ENCODE measurements at regions of chr1 and their contacts with region 1.

Region 1: DNA sequence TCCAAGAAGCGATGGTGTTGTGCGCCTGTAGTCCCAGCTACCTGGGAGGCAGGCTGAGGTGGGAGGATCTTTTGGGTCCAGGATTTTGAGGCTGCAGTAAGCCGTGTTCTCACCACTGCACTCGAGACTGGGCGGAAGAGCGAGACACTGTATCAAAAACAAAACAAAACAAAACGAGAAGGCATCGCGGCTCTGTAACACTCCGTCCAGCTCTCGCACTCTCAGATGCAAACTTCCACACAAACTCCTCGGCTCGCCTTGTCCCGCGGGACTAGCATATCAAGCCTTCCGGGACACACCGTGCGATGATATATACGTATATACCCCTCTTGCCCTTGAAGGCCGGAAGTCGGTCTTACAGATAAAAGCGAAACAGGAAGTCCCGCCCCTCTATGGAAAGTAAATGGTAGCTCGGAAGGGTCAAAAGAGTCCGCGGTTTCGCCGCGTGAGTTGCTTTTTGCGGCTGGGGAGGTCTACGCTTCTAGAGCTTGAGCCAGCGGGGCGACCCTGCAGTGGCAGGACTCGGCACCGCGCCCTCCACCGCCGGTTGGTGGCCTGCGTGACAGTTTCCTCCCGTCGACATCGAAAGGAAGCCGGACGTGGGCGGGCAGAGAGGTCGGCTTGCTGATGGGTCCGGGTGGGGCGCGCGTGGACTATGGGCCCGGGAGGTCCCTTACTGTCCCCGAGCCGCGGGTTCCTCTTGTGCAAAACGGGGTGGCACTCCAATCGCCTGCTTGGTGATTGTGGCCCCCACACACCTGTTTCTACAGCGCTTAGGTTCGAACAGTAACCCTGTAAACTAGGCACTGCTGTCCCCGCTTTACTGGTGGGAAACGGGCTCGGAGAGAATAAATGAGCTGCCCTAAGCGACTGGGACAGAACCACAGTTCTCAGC is at the start of gene COA6:
- DNase-seq: peak; percentile 90
- H3K4me3 Mint-ChIP-seq: peak within 1 kb of the TSS; percentile 96
- H3K27ac Mint-ChIP-seq: peak within 1 kb of the TSS; percentile 98
- H3K4me1 Mint-ChIP-seq: peaks cover 54% of the 10 kb centered on the region
- H3K27me3 Mint-ChIP-seq: no peaks in the 10 kb centered on the region
- total RNA-seq, gene COA6: 45.8 to 50.2 TPM

Region 2: GRCh38 chr1:234355782-234356510 is 17.4 kb before region 1 on chr1:
- CTCF ChIA-PET with region 1: no interaction called
- intact Hi-C with region 1: loop called (anchors 1 kb)
- DNase-seq: no peak
- H3K4me3 Mint-ChIP-seq: peak overlapping the region; percentile 74
- H3K27ac Mint-ChIP-seq: peak overlapping the region; percentile 82
- H3K4me1 Mint-ChIP-seq: peaks cover 7% of the 10 kb centered on the region
- H3K27me3 Mint-ChIP-seq: peaks cover 1% of the 10 kb centered on the region

Region 3: GRCh38 chr1:234478481-234479309 is 105.4 kb after region 1 on chr1 and contains the start of gene TARBP1:
- CTCF ChIA-PET with region 1: no interaction called
- intact Hi-C with region 1: loop called (anchors 1 kb)
- DNase-seq: peak; percentile 77
- H3K4me3 Mint-ChIP-seq: peak within 1 kb of the TSS; percentile 79
- H3K27ac Mint-ChIP-seq: peak within 1 kb of the TSS; percentile 46
- H3K4me1 Mint-ChIP-seq: peaks cover 49% of the 10 kb centered on the region
- H3K27me3 Mint-ChIP-seq: peaks cover 12% of the 10 kb centered on the region
- total RNA-seq, gene TARBP1: 40.2 to 41.6 TPM

Region 4: GRCh38 chr1:234509452-234510328 is 136.4 kb after region 1 on chr1:
- CTCF ChIA-PET with region 1: no interaction called
- intact Hi-C with region 1: no loop called
- DNase-seq: no peak
- H3K4me3 Mint-ChIP-seq: no peak overlapping the region
- H3K27ac Mint-ChIP-seq: no peak overlapping the region
- H3K4me1 Mint-ChIP-seq: peaks cover 16% of the 10 kb centered on the region
- H3K27me3 Mint-ChIP-seq: no peaks in the 10 kb centered on the region

Region 5: GRCh38 chr1:234599617-234600417 is 226.5 kb after region 1 on chr1:
- CTCF ChIA-PET with region 1: no interaction called
- intact Hi-C with region 1: loop called (anchors 10 kb)
- DNase-seq: peak; percentile 74
- H3K4me3 Mint-ChIP-seq: peak overlapping the region; percentile 83
- H3K27ac Mint-ChIP-seq: peak overlapping the region; percentile 99
- H3K4me1 Mint-ChIP-seq: peaks cover 50% of the 10 kb centered on the region
- H3K27me3 Mint-ChIP-seq: no peaks in the 10 kb centered on the region

Measured in activated naive CD4-positive, alpha-beta T cell treated with anti-CD3 and anti-CD28 coated beads for 36 hours (primary cell).